ENCODE measurements at regions of chr1 and their contacts with region 1.

Region 1: GRCh38 chr1:27725374-27726173 is at the start of gene FAM76A:
- DNase-seq: peak; percentile 96
- H3K4me3 Mint-ChIP-seq: peak within 1 kb of the TSS; percentile 68
- H3K27ac Mint-ChIP-seq: peak within 1 kb of the TSS; percentile 93
- H3K4me1 Mint-ChIP-seq: no peaks in the 10 kb centered on the region
- H3K27me3 Mint-ChIP-seq: no peaks in the 10 kb centered on the region
- CTCF ChIP-seq: peak; percentile 43
- total RNA-seq, gene FAM76A: 10.7 and 11.5 TPM in 2 replicates

Region 2: DNA sequence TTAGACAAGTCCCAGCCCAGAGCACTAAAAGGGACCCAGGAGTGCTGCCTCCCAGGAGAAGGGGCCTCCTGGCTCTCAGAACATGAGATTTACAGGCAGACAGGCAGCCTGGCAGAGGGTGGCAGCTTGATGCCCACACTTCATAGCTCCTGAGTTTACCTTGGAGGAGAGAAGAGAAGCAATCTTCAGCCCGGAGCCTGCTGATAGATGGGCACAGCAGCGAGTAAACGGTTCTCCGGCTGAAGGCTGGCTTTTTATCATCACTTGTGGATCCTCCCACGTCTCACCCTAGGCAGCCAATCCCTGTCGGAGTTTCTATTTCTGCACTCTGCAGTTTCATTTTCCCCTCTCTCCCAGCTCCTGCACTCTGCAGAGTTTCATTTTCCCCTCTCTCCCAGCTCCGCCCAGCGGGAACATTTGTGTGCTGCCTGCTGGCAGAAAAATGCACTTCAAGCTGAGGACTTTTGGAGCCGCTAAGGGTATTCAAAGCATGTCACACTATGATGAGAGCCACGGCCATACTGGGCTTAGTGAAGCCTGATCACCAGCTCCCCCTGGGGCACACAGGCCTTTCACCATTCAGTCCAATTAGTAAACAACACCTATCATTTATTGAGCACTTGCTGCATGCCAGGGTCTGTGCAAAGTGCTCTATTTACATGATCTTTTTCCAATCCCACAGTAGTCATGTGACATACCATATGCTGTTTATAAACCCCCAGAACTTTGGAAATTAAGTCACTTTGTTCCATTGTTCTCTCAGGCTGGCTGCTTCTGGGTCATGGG is 53.4 kb before region 1 on chr1 and contains the start of gene IFI6:
- CTCF ChIA-PET with region 1: interaction called, 15 read pairs
- intact Hi-C with region 1: loop called (anchors 5 kb)
- DNase-seq: peak; percentile 82
- H3K4me3 Mint-ChIP-seq: peak within 1 kb of the TSS; percentile 78
- H3K27ac Mint-ChIP-seq: peak within 1 kb of the TSS; percentile 92
- H3K4me1 Mint-ChIP-seq: peaks cover 18% of the 10 kb centered on the region
- H3K27me3 Mint-ChIP-seq: no peaks in the 10 kb centered on the region
- CTCF ChIP-seq: no peak
- total RNA-seq, gene IFI6: 426 and 1,520 TPM in 2 replicates

Region 3: DNA sequence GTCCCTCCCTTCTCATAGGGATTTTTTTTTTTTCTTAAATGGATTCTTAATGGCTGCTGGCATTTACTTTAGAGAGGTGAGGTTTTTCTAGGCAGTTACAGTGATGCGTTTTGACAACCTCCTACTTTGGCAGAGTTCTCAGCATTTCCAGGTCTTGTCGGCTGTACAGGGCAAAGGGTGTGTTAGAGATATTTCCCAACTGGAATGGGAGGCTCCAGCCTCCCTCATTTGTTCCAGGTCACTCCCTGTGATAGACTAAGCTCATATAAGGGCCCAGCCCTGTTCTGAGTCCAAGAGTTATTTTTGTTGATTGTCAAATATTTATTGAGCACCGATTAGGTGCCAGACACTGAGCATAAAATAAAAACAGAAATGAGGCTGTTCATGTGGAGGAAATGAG is 226.6 kb after region 1 on chr1:
- CTCF ChIA-PET with region 1: no interaction called
- intact Hi-C with region 1: no loop called
- DNase-seq: no peak
- H3K4me3 Mint-ChIP-seq: no peak overlapping the region
- H3K27ac Mint-ChIP-seq: no peak overlapping the region
- H3K4me1 Mint-ChIP-seq: no peaks in the 10 kb centered on the region
- H3K27me3 Mint-ChIP-seq: no peaks in the 10 kb centered on the region
- CTCF ChIP-seq: no peak

Measured in Calu3 (cell line).